ENCODE measurements at regions of chr7 and their contacts with region 1.

Region 1: GRCh38 chr7:44581879-44582603 is at the start of gene TMED4:
- DNase-seq: peak; percentile 100
- ATAC-seq: peak; percentile 86
- H3K4me3 ChIP-seq: peak within 1 kb of the TSS; percentile 87
- H3K4me3 Mint-ChIP-seq: peak within 1 kb of the TSS; percentile 95
- H3K27ac ChIP-seq: peak within 1 kb of the TSS; percentile 96
- H3K27ac Mint-ChIP-seq: peak within 1 kb of the TSS; percentile 97
- H3K4me1 ChIP-seq: peaks cover 32% of the 10 kb centered on the region
- H3K4me1 Mint-ChIP-seq: peaks cover 39% of the 10 kb centered on the region
- H3K27me3 ChIP-seq: no peaks in the 10 kb centered on the region
- H3K27me3 Mint-ChIP-seq: no peaks in the 10 kb centered on the region
- CTCF ChIP-seq: no peak
- total RNA-seq, gene TMED4: 134 to 138 TPM

Region 2: DNA sequence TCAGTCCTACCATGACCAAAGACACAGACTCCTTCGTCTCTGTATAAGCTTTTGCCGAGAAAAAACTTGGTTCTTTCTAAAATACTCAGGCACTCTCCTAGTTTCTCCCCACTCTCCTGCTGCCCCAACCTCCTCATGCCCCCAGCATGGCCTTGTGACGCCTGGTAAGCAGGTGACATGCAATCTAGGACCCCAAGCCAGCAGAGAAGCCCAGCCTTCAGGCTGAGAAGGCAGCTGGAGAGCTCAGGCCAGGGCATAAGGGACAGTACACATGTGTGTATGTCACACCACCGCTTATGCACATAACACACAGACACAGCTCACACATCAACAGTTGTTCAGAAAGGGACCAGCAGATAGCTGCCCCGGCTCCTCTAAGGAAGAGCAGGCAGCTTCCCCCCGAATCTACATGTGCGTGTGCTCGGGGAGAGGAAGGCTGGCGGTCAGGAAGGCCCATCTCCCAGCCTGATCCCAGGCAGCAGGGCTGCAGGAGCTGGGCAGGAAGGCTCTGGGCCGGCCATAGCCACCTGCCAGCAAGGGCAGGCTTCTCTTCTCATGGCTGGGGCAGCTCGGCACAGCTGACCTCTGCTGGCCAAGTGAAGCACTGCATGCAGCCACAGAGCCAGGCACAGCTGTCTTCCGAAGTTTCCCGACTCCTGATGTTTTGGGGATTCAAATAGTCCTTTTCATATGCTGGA is 16.8 kb before region 1 on chr7:
- CTCF ChIA-PET with region 1: interaction called, 7 read pairs
- POLR2A ChIA-PET with region 1: interaction called, 18 read pairs
- intact Hi-C with region 1: no loop called
- DNase-seq: peak; percentile 40 to 78 (median 61)
- ATAC-seq: peak; percentile 94
- H3K4me3 ChIP-seq: no peak overlapping the region
- H3K4me3 Mint-ChIP-seq: no peak overlapping the region
- H3K27ac ChIP-seq: no peak overlapping the region
- H3K27ac Mint-ChIP-seq: peak overlapping the region; percentile 29
- H3K4me1 ChIP-seq: peaks cover 9% of the 10 kb centered on the region
- H3K4me1 Mint-ChIP-seq: peaks cover 27% of the 10 kb centered on the region
- H3K27me3 ChIP-seq: no peaks in the 10 kb centered on the region
- H3K27me3 Mint-ChIP-seq: no peaks in the 10 kb centered on the region
- CTCF ChIP-seq: peak; percentile 93

Region 3: DNA sequence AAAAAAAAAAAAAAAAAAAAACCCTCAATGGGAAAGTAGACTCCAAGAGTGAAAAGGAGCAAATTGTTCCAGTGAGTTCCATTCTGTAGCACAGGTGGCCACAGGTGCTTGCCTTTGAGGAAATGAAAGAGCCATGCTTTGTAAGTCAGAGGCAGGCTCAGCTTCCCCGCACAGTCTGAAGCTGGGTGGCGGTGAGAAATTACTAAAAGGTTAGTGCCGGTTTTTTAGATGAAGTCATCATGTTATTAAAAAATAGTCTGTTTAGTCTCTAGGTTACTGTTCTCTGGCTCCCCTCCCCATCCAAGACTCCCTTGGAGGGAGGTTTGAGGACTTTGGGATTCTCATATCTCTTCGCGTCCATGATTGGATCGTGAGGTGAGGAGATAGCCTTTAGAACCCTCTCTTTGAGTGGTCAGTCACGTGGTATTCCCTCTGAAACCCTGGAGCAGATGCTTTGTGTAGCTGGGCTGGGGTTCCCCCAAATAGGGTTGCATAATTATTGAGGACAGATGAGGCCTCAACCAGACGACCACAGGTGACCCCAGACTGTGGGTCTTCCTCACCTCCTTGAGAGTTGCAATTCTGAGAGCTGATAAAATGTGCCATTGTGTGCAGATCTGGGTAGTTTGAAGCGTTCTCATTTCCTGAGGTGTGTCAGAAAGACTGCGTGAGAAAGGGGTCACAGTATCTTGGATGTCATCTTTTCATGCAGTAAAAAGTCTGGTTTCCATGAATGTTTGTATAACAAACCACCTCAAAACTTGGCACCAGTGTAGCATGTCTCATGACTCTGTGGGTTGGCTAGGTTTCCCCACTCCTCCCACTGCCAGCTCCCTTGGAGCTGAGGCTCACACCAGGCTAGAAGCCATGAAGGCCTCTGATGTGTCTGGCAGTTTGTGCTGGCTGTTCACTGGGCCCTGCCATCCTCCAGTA is 51.5 kb after region 1 on chr7:
- CTCF ChIA-PET with region 1: no interaction called
- POLR2A ChIA-PET with region 1: interaction called, 13 read pairs
- intact Hi-C with region 1: loop called in 1 of 2 experiments (anchors 1 kb)
- DNase-seq: peak in 12 of 14 experiments; percentile 29 to 92 (median 59)
- ATAC-seq: peak; percentile 47
- H3K4me3 ChIP-seq: no peak overlapping the region
- H3K4me3 Mint-ChIP-seq: peak overlapping the region; percentile 78
- H3K27ac ChIP-seq: peak overlapping the region; percentile 87 to 91
- H3K27ac Mint-ChIP-seq: peak overlapping the region; percentile 96
- H3K4me1 ChIP-seq: peaks cover 100% of the 10 kb centered on the region
- H3K4me1 Mint-ChIP-seq: peaks cover 81% of the 10 kb centered on the region
- H3K27me3 ChIP-seq: no peaks in the 10 kb centered on the region
- H3K27me3 Mint-ChIP-seq: no peaks in the 10 kb centered on the region
- CTCF ChIP-seq: no peak

Region 4: GRCh38 chr7:44638611-44639557 is 56.8 kb after region 1 on chr7:
- CTCF ChIA-PET with region 1: no interaction called
- POLR2A ChIA-PET with region 1: interaction called, 13 read pairs
- intact Hi-C with region 1: no loop called
- DNase-seq: peak; percentile 58 to 93 (median 78)
- ATAC-seq: peak; percentile 55
- H3K4me3 ChIP-seq: peak overlapping the region; percentile 21
- H3K4me3 Mint-ChIP-seq: peak overlapping the region; percentile 89
- H3K27ac ChIP-seq: peak overlapping the region; percentile 90 to 95
- H3K27ac Mint-ChIP-seq: peak overlapping the region; percentile 96
- H3K4me1 ChIP-seq: peaks cover 86% of the 10 kb centered on the region
- H3K4me1 Mint-ChIP-seq: peaks cover 72% of the 10 kb centered on the region
- H3K27me3 ChIP-seq: no peaks in the 10 kb centered on the region
- H3K27me3 Mint-ChIP-seq: no peaks in the 10 kb centered on the region
- CTCF ChIP-seq: no peak

Region 5: GRCh38 chr7:44748045-44748947 is 166.3 kb after region 1 on chr7 and contains the start of gene ZMIZ2:
- CTCF ChIA-PET with region 1: no interaction called
- POLR2A ChIA-PET with region 1: interaction called, 9 read pairs
- intact Hi-C with region 1: loop called (anchors 5 kb)
- DNase-seq: peak; percentile 85 to 97 (median 92)
- ATAC-seq: peak; percentile 85
- H3K4me3 ChIP-seq: peak within 1 kb of the TSS; percentile 87
- H3K4me3 Mint-ChIP-seq: peak within 1 kb of the TSS; percentile 84
- H3K27ac ChIP-seq: peak within 1 kb of the TSS; percentile 70 to 75
- H3K27ac Mint-ChIP-seq: peak within 1 kb of the TSS; percentile 86
- H3K4me1 ChIP-seq: peaks cover 37% of the 10 kb centered on the region
- H3K4me1 Mint-ChIP-seq: peaks cover 43% of the 10 kb centered on the region
- H3K27me3 ChIP-seq: no peaks in the 10 kb centered on the region
- H3K27me3 Mint-ChIP-seq: no peaks in the 10 kb centered on the region
- CTCF ChIP-seq: no peak
- total RNA-seq, gene ZMIZ2: 81.5 to 82.0 TPM

Region 6: GRCh38 chr7:44986218-44987053 is 404.4 kb after region 1 on chr7:
- CTCF ChIA-PET with region 1: no interaction called
- POLR2A ChIA-PET with region 1: no interaction called
- intact Hi-C with region 1: loop called in 1 of 2 experiments (anchors 10 kb)
- DNase-seq: peak; percentile 86 to 99 (median 94)
- ATAC-seq: peak; percentile 93
- H3K4me3 ChIP-seq: peak overlapping the region; percentile 74
- H3K4me3 Mint-ChIP-seq: peak overlapping the region; percentile 95
- H3K27ac ChIP-seq: peak overlapping the region; percentile 94 to 95
- H3K27ac Mint-ChIP-seq: peak overlapping the region; percentile 95
- H3K4me1 ChIP-seq: peaks cover 52% of the 10 kb centered on the region
- H3K4me1 Mint-ChIP-seq: peaks cover 50% of the 10 kb centered on the region
- H3K27me3 ChIP-seq: no peaks in the 10 kb centered on the region
- H3K27me3 Mint-ChIP-seq: no peaks in the 10 kb centered on the region
- CTCF ChIP-seq: no peak